ENCODE measurements at regions of chr15 and their contacts with region 1.

Region 1: DNA sequence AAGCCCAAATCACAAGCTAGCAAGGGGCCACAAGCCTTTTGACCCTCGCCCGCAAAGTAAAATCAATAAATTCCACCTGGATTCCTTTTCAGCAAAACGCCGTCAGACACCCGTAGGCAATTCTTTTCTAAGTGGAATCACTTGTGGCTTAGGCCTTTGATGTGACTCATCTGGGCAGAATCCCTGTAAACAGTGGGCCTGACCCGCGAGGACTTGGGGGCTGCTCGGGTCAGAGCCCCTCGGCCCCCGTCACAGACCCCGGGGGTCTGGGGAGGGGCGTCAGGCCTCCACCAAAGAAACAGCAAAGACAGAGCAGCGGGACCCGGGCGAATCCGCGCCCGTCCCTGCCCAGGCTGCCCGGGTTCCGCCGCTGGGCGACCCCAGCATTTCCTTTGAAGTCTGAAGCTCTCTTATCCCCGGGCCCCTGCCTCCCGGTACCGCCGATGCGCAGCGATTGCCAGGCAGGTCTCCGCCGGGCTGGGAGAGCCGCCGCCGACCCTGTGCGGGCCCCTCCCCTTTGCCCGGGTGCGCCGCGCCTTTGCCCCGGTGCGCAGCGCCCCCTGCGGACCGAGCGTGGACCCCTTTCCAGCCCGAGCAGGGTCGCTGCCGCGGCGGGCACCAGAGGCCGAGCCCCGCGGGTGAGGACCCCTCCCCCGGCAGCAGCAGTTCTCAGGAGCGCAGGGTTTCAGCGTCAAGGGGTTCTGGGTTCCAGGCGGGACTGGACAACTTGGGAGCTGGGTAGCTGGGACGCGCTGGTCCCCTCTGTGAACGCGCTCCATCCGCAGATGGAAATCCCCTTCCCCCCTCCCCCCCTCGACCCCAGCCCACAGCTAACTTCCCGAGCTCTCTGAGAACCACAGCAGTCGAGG is 178.3 kb downstream of the UACA start:
- H3K4me3 ChIP-seq: peak overlapping the region; percentile 43
- H3K27ac ChIP-seq: peak overlapping the region; percentile 77
- H3K4me1 ChIP-seq: peaks cover 16% of the 10 kb centered on the region; the same call in 1 of the 2 replicates
- CTCF ChIP-seq: peak; percentile 81

Region 2: DNA sequence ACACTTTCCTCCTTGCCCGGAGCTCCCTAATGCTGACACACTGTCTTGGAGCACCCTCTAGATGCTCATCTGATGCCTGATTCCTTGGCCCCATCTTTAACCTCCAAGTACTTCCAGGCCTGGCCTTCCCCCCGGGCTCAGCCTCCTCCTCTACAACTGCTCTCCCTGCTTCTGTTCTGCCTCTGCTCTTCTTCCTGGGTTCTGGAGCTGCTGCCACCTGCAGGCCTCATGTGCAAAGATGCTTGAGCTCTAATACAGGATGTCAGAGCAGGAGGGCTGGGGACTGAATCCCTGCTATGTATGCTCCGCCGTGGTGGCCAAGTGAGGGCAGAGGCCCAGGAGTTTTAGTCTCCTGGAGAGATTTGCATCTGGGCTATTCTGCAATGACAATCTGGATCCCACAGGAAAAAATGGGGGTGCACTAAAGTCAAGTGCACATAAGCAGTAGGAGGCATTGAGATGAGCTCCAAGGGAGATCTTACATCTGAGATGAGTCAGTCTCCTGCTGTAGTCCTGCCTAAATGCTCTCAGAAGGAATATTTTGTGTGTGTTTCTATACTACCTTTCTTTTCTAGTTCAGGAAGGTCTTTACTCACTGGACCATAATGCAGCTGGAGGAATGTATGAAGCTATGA is 118.1 kb before region 1 on chr15:
- CTCF ChIA-PET with region 1: interaction called, 12 read pairs
- POLR2A ChIA-PET with region 1: no interaction called
- H3K4me3 ChIP-seq: no peak overlapping the region
- H3K27ac ChIP-seq: no peak overlapping the region
- H3K4me1 ChIP-seq: no peaks in the 10 kb centered on the region
- CTCF ChIP-seq: peak; percentile 90

Region 3: GRCh38 chr15:70512772-70513362 is 72.2 kb before region 1 on chr15:
- CTCF ChIA-PET with region 1: interaction called, 50 read pairs
- POLR2A ChIA-PET with region 1: interaction called, 7 read pairs
- H3K4me3 ChIP-seq: no peak overlapping the region
- H3K27ac ChIP-seq: no peak overlapping the region
- H3K4me1 ChIP-seq: peaks cover 9% of the 10 kb centered on the region; the same call in 1 of the 2 replicates
- CTCF ChIP-seq: peak; percentile 73

Region 4: DNA sequence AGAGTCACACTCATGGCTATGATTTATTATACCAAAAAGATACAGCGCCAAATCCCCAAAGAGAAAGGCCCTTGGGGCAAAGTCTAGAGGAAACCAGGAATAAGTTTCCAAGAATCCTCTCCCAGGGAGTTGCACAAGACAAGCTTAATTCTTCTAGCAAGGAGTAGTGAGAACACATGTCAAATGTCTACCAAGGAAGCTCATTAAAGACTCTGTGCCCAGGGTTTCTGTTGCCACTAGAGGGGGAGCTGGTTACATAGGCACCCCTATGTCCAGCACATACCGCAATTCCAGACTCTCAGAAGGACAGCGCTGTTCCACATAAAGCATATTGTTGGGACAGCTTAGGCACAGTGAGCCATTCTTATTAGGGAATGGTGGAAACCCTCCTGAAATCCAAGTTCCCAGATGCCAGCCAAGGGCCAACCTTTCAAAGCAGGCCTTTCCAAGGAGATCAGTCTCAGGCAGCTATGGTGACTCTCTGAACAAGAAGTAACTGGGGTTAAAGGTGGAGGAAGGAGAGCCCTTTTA is 15.9 kb before region 1 on chr15:
- CTCF ChIA-PET with region 1: interaction called, 46 read pairs
- POLR2A ChIA-PET with region 1: interaction called, 4 read pairs
- H3K4me3 ChIP-seq: no peak overlapping the region
- H3K27ac ChIP-seq: peak overlapping the region; percentile 20; the same call in 1 of the 2 replicates
- H3K4me1 ChIP-seq: peaks cover 15% of the 10 kb centered on the region
- CTCF ChIP-seq: peak; percentile 94

Region 5: DNA sequence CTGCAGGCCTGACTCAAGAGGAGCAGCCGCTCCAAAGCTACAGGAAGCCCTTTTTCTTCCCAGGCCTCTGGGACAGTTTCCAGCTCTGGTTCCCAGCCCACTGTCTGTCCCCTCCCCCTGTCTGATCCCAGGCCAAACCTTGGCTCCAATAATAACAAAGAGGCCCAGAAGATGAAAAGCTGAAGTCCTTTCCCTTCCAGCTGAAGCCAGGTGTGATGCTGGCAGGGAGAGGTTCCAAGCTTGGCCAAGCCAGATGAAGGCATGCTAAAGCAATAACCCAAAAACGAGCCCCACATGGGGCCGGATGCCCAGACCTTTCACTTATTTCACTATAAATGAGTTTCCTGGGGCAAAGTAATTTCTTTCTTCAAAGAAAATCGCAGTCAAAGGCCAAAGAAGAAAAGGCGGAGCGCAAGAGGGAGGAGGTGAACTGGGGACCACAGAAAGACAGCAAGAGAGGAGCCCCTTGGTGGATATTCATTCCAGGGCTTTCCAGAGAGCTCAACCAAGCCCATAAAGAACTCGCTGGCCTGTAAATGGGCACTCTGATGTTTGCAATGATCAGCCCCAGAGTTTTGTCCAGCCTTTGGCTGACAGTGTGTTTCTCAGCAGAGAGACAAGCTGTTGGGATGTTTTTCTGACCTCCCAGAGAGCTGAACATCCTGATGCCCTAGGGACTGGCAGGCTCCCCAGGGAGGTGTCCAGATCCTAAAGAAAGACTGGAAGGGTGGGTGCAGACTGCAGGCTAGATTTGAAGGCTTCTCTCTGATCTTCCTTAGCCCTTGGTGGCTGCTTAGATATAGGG is 20.7 kb after region 1 on chr15:
- CTCF ChIA-PET with region 1: interaction called, 20 read pairs
- POLR2A ChIA-PET with region 1: no interaction called
- H3K4me3 ChIP-seq: no peak overlapping the region
- H3K27ac ChIP-seq: no peak overlapping the region
- H3K4me1 ChIP-seq: peaks cover 8% of the 10 kb centered on the region
- CTCF ChIP-seq: no peak

Region 6: DNA sequence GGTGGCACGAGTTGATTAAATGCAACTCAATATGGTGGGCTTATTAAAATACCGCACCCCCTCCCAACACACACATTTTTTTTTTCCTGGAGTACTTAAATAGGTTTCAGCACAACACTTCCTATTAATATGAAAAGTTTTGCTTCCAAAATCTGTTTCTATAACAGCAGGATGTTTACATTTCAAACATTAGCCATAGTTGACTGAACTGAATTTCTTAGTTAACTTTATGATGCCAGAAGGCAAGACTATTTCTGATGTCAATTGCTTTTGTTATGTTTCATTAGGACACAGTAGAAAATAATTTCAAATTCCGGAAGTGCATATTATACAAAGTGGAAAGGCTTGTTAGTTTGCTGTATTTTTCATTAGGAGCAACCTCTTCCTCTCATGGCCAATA is 73.6 kb after region 1 on chr15:
- CTCF ChIA-PET with region 1: no interaction called
- POLR2A ChIA-PET with region 1: no interaction called
- H3K4me3 ChIP-seq: no peak overlapping the region
- H3K27ac ChIP-seq: no peak overlapping the region
- H3K4me1 ChIP-seq: no peaks in the 10 kb centered on the region
- CTCF ChIP-seq: no peak

Measured in HEK293 (cell line).